ENCODE measurements at regions of chr17 and their contacts with region 1.

Region 1: GRCh38 chr17:74379495-74380085 is 12.3 kb downstream of the GPR142 start:
- DNase-seq: peak; percentile 92
- ATAC-seq: peak; percentile 92
- H3K4me3 Mint-ChIP-seq: no peak overlapping the region
- H3K27ac Mint-ChIP-seq: no peak overlapping the region
- H3K4me1 Mint-ChIP-seq: peaks cover 13% of the 10 kb centered on the region
- H3K27me3 Mint-ChIP-seq: peaks cover 8% of the 10 kb centered on the region

Region 2: GRCh38 chr17:74182041-74182723 is 197.4 kb before region 1 on chr17:
- CTCF ChIA-PET with region 1: no interaction called
- POLR2A ChIA-PET with region 1: no interaction called
- DNase-seq: no peak
- ATAC-seq: no peak
- H3K4me3 Mint-ChIP-seq: no peak overlapping the region
- H3K27ac Mint-ChIP-seq: no peak overlapping the region
- H3K4me1 Mint-ChIP-seq: no peaks in the 10 kb centered on the region
- H3K27me3 Mint-ChIP-seq: no peaks in the 10 kb centered on the region

Region 3: DNA sequence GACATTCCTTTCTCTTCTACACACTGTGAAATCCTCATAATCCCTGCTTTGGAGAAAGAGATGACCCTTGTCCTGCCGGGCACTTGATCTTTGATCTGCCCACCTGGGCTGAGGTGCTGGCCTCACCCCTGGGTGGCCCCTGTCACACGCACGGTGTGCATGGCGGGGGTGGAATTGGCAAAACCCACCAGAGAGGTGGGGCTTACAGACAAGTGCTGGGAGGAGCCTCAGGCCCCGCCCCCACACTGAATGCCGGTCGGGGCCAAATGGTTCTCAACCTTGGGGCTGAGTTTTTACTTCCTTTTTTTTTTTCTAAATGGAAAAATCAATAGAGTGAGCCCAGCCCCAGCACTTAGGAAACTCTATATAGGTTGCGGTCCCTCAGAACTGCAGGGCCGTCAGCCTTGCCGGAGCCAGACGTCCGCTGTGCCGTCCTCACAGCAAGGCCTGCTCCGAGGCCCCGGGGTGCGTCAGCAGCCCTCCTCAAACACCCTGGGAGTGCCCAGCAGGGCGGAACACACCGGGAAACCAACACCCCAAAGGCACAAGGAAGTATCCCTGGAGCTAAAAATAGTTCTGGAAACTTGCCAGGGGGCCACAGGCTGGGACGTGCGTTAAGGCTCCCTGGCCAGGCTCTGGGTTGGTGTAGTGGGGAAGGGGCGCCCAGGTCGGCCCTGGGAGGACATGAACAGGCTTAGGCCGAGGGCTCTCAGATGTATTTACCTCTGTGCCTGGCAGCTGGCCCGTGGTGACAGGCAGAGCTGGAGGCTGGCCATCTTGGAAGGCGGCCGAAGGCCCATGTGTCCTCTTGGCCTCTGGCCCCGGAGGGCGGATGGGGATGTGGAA is 63.3 kb after region 1 on chr17:
- CTCF ChIA-PET with region 1: interaction called, 11 read pairs
- POLR2A ChIA-PET with region 1: no interaction called
- DNase-seq: no peak
- ATAC-seq: peak; percentile 41
- H3K4me3 Mint-ChIP-seq: no peak overlapping the region
- H3K27ac Mint-ChIP-seq: no peak overlapping the region
- H3K4me1 Mint-ChIP-seq: peaks cover 6% of the 10 kb centered on the region
- H3K27me3 Mint-ChIP-seq: peaks cover 10% of the 10 kb centered on the region

Region 4: GRCh38 chr17:74485841-74486240 is 106.3 kb after region 1 on chr17:
- CTCF ChIA-PET with region 1: interaction called, 66 read pairs
- POLR2A ChIA-PET with region 1: interaction called, 4 read pairs
- DNase-seq: no peak
- ATAC-seq: no peak
- H3K4me3 Mint-ChIP-seq: no peak overlapping the region
- H3K27ac Mint-ChIP-seq: no peak overlapping the region
- H3K4me1 Mint-ChIP-seq: peaks cover 2% of the 10 kb centered on the region
- H3K27me3 Mint-ChIP-seq: peaks cover 18% of the 10 kb centered on the region

Region 5: DNA sequence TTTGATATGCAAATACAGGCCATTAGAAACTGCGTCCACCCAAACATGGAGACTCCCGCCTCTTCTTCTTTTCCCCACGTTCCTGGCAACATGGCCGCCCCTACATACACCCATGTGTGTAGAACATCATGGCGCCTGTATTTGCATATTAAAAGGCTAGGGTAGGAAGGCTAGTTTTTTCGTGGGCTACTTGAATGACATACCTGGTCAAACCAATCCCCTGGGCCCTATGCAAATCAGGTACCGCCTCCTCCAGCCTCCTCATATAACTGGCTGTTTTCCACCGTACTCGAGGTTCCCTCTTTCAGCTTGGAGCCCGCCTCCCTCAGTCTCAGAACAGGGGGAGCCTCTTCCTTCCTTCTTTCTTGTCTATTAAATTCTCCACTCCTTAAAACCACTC is 152.5 kb after region 1 on chr17:
- CTCF ChIA-PET with region 1: interaction called, 11 read pairs
- POLR2A ChIA-PET with region 1: no interaction called
- DNase-seq: no peak
- ATAC-seq: no peak
- H3K4me3 Mint-ChIP-seq: no peak overlapping the region
- H3K27ac Mint-ChIP-seq: no peak overlapping the region
- H3K4me1 Mint-ChIP-seq: peaks cover 6% of the 10 kb centered on the region
- H3K27me3 Mint-ChIP-seq: peaks cover 33% of the 10 kb centered on the region

Measured in activated CD8-positive, alpha-beta T cell treated with anti-CD3 and anti-CD28 coated beads, Interleukin-2, amount 10 ng/mL, durations not matched to agents 7 days and 5 days (primary cell).